Common myeloid progenitor, CD34-positive (primary cell): ENCODE measurements at regions of chr11 and their contacts with region 1.

Region 1: DNA sequence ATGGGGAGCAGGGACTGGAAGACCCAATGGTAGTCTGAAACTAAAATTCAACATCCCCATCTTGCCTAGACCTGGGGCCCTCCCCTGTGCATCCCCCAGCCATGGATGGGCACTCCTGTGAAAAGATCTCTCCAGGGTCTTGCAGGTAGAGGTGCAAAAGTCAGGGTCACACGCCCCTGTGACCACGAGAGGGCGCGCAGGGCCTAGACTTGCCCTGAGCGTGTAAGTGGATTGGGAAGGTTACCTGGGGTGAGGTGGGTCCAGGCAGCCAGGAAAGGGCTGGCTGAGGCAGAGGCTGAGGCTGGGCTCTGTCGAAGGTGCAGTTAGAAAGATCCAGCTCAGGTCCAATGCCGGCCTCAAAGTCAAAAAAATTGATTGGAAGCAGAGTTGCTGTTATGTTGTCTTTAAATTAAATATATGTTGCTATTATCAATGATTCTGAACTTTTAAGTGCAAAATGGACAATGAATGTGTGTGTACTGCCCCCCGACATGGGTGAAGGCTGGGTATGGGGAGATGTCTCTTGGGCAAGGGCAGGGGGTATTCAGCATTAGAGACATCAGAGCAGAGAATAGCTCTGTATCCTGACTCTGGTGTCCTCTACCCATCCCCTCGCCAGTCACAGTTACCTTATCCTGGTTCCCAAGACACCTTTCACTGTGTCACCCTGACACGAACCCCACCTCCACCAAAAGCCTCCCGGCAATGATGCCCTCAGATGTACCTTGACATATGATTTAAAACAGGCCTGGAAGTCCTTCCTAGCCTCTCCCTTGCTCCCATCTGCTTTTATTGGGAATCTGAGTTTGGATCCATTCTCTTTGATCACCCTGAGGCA is 4.7 kb upstream of the POU2F3 start:
- DNase-seq: peak; percentile 70 to 78 (median 74)
- H3K4me3 ChIP-seq: no peak overlapping the region
- H3K27ac ChIP-seq: no peak overlapping the region
- H3K4me1 ChIP-seq: peaks cover 0 to 7% (median 3%) of the 10 kb centered on the region in 4 experiments
- H3K27me3 ChIP-seq: peaks cover 0 to 42% (median 23%) of the 10 kb centered on the region in 5 experiments

Region 2: DNA sequence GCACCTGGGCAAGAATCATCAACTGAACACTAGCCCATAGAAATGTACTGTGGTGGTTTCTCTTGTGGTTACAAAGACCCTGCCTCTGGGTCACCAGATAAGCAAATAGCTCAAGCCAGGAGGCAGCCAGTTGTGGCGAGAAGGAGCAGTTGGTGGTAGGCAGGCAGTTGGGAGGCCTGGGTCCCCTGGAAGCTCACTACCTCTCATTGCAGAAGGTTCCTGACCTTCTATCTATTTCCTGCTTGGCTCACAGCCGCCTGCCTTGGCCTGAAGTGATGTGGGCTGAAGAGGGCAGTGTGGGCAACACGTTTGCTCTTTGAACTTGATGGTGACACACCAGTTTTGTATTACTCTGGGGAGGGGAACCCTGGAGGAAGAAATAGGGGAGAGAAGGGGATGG is 540.9 kb before region 1 on chr11:
- CTCF ChIA-PET with region 1: no interaction called
- POLR2A ChIA-PET with region 1: no interaction called
- DNase-seq: peak; percentile 63 to 94 (median 90)
- H3K4me3 ChIP-seq: no peak overlapping the region
- H3K27ac ChIP-seq: no peak overlapping the region
- H3K4me1 ChIP-seq: peaks cover 2 to 58% (median 33%) of the 10 kb centered on the region in 4 experiments
- H3K27me3 ChIP-seq: peaks cover 0 to 5% (median 0%) of the 10 kb centered on the region in 5 experiments

Region 3: DNA sequence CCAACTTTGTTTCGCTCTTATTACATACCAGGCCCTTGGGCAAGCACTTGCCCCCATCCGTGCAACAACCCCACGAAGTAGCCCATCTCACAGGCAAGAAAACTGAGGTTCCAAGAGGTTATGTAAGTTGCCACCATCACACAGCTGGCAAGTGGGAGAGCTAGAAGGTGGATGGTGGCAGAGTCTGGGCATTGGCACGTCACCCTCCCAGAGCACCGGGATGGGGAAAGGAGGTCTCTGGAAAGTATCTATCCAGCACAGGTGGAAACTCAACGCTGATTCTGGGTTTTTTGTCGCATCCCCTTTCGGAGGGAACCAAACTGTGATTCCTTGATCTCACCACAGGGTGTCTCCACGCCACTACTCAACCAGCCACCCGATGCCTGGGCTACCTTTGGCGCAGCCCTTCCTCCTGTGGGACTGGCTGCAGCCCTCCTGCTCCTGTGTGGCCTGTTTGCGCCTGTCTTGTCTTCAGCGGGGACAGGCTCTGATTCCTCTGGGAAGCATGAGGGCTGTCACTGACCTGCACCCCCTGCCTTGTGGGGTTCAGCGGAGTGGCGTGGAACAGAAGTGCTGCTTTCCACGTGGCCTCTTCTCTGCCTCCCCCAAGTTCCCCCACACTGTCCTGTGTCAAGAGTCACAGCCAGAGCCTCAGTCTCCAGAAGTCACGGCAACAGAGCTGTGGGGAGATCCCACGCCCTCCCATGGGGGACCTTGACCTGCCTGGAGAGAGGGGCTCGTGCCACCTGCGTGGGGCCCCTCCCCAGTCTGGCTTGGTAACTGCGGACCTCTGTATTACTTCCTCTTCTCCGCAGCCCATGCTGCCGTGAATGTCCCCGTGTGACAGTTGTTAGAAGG is 63.0 kb before region 1 on chr11:
- CTCF ChIA-PET with region 1: interaction called, 326 read pairs
- POLR2A ChIA-PET with region 1: no interaction called
- DNase-seq: peak; percentile 66 to 76 (median 73)
- H3K4me3 ChIP-seq: peak overlapping the region in 5 of 7 experiments; percentile 3 to 57 (median 41)
- H3K27ac ChIP-seq: no peak overlapping the region
- H3K4me1 ChIP-seq: peaks cover 0 to 28% (median 26%) of the 10 kb centered on the region in 4 experiments
- H3K27me3 ChIP-seq: peaks cover 1 to 44% (median 25%) of the 10 kb centered on the region in 5 experiments

Region 4: DNA sequence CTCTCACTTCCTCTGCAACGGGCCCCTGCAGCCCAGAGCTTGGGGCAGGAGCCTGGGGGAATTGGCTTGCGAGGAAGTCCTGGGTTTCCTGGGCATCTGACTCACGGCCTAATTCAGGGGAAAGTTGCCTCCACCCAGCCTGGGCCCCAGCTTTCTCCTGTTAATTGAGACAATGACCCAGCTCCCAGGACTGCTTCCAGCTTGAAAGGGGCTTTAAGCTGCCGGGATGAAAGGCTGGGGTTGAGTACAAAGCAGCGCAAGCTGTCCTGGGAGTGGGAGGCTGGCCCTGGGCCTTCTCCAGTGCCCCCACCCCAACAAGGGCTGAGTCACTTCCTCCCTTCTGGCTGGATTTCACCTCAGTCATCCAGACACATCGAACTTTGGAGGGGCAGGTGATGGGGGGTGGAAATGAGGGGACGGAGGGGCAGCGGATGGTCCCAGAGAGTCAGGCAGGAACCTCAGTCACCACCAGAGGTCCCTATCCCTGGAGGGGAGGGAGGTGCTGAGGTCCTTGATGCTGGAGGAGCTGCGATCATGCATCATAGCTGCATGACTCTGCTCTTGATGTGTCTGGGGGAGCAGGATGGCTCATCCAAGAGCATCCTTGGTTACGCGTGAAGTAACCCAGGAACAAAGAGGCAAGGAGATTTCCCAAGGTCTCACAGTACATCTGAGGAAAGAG is 54.6 kb before region 1 on chr11:
- CTCF ChIA-PET with region 1: interaction called, 326 read pairs
- POLR2A ChIA-PET with region 1: no interaction called
- DNase-seq: peak in 2 of 3 donors; percentile 14 to 29
- H3K4me3 ChIP-seq: no peak overlapping the region
- H3K27ac ChIP-seq: no peak overlapping the region
- H3K4me1 ChIP-seq: peaks cover 0 to 16% (median 2%) of the 10 kb centered on the region in 4 experiments
- H3K27me3 ChIP-seq: peaks cover 0 to 3% (median 0%) of the 10 kb centered on the region in 5 experiments

Region 5: GRCh38 chr11:120248551-120249278 is 13.5 kb after region 1 on chr11:
- CTCF ChIA-PET with region 1: interaction called, 64 read pairs
- POLR2A ChIA-PET with region 1: no interaction called
- DNase-seq: peak in 2 of 3 donors; percentile 49 to 53
- H3K4me3 ChIP-seq: no peak overlapping the region
- H3K27ac ChIP-seq: no peak overlapping the region
- H3K4me1 ChIP-seq: peaks cover 0 to 3% (median under 1%) of the 10 kb centered on the region in 4 experiments
- H3K27me3 ChIP-seq: peaks cover 0 to 82% (median 10%) of the 10 kb centered on the region in 5 experiments

Region 6: DNA sequence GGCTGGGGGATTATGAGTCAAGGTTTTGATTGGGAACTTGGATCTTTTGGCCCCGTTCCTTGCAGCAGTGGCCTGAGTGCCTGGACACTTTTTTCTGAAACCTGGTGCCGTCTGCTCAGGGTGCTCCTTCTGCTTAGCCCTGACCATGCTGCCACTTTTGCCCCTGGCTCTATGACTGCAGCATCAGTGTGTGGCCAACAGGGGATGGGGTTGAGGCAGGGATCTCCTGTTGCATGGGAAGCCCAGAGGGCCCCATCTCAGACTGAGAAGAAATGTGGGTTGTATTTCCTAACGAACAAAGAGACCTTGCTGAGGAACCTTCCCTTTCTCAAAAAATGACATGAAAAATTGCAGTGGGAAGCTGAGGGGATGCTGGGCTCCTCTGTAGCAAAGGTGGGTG is 23.4 kb after region 1 on chr11:
- CTCF ChIA-PET with region 1: interaction called, 16 read pairs
- POLR2A ChIA-PET with region 1: no interaction called
- DNase-seq: no peak
- H3K4me3 ChIP-seq: no peak overlapping the region
- H3K27ac ChIP-seq: no peak overlapping the region
- H3K4me1 ChIP-seq: peaks cover 0 to 5% (median 2%) of the 10 kb centered on the region in 4 experiments
- H3K27me3 ChIP-seq: peaks cover 10 to 59% (median 33%) of the 10 kb centered on the region in 5 experiments